CD4-positive, alpha-beta T cell (primary cell): ENCODE measurements at regions of chr7 and their contacts with region 1.

Region 1: DNA sequence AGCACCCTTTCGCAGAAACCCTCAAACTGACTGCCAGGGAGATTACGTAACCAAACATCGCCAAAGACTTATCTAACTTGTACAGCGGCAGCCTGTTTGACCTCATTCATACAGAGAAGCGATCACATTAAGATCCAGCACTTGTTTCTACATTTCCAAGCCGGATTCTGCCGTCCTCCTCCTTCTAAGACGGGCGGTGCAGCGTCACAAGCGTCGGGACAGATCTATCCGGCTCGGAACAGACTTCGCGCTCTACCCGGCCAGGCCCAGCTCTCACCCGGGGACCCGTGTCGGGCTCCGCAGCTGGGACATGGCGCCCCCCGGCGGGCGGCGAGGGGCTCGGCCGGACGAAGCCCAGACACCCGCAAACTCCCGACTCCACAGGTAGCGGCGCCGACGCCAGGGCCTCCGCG is 373 bp downstream of the H2AZ2 start:
- DNase-seq: peak; percentile 75 to 94 (median 84)
- ATAC-seq: peak; percentile 54
- H3K4me3 ChIP-seq: peak overlapping the region; percentile 71
- H3K4me3 Mint-ChIP-seq: peak overlapping the region; percentile 87
- H3K27ac ChIP-seq: peak overlapping the region; percentile 91 to 99
- H3K27ac Mint-ChIP-seq: peak overlapping the region; percentile 95
- H3K4me1 ChIP-seq: peaks cover 17% of the 10 kb centered on the region
- H3K4me1 Mint-ChIP-seq: peaks cover 43% of the 10 kb centered on the region
- H3K27me3 ChIP-seq: no peaks in the 10 kb centered on the region
- H3K27me3 Mint-ChIP-seq: peaks cover 4% of the 10 kb centered on the region
- CTCF ChIP-seq: peak; percentile 68

Region 2: DNA sequence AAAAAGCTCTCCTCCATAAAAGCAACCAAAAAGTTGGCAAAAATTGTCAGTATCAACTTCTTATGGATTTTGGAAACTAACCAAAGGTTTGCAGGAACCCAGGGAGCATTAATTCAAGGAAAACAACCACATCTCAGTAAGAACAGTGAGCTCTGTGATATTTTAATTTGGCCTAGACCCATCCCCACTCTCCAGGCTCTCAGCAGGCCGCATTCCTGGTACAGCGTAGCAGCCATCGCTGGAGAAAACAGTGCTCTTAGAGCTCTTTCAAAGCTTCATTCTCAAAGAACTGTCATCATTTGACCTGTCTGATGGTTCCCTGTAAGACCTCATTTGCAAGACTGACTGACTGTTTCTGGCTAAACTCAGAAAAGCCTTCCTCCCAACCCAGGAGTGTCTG is 438.9 kb before region 1 on chr7:
- CTCF ChIA-PET with region 1: no interaction called
- POLR2A ChIA-PET with region 1: no interaction called
- intact Hi-C with region 1: no loop called
- DNase-seq: no peak
- ATAC-seq: no peak
- H3K4me3 ChIP-seq: no peak overlapping the region
- H3K4me3 Mint-ChIP-seq: no peak overlapping the region
- H3K27ac ChIP-seq: no peak overlapping the region
- H3K27ac Mint-ChIP-seq: no peak overlapping the region
- H3K4me1 ChIP-seq: no peaks in the 10 kb centered on the region
- H3K4me1 Mint-ChIP-seq: peaks cover 22% of the 10 kb centered on the region
- H3K27me3 ChIP-seq: no peaks in the 10 kb centered on the region
- H3K27me3 Mint-ChIP-seq: no peaks in the 10 kb centered on the region
- CTCF ChIP-seq: no peak

Region 3: GRCh38 chr7:44587843-44588711 is 259.4 kb before region 1 on chr7:
- CTCF ChIA-PET with region 1: interaction called, 3 read pairs
- POLR2A ChIA-PET with region 1: interaction called, 65 read pairs
- intact Hi-C with region 1: loop called (anchors 1 to 2 kb)
- DNase-seq: peak; percentile 30 to 81 (median 57)
- ATAC-seq: peak; percentile 76
- H3K4me3 ChIP-seq: no peak overlapping the region
- H3K4me3 Mint-ChIP-seq: no peak overlapping the region
- H3K27ac ChIP-seq: no peak overlapping the region
- H3K27ac Mint-ChIP-seq: no peak overlapping the region
- H3K4me1 ChIP-seq: peaks cover 2% of the 10 kb centered on the region
- H3K4me1 Mint-ChIP-seq: peaks cover 7% of the 10 kb centered on the region
- H3K27me3 ChIP-seq: no peaks in the 10 kb centered on the region
- H3K27me3 Mint-ChIP-seq: no peaks in the 10 kb centered on the region
- CTCF ChIP-seq: peak; percentile 88

Region 4: GRCh38 chr7:44638611-44639557 is 208.6 kb before region 1 on chr7:
- CTCF ChIA-PET with region 1: interaction called, 3 read pairs
- POLR2A ChIA-PET with region 1: interaction called, 6 read pairs
- intact Hi-C with region 1: loop called in 1 of 2 experiments (anchors 1 kb)
- DNase-seq: peak; percentile 58 to 93 (median 78)
- ATAC-seq: peak; percentile 55
- H3K4me3 ChIP-seq: peak overlapping the region; percentile 21
- H3K4me3 Mint-ChIP-seq: peak overlapping the region; percentile 89
- H3K27ac ChIP-seq: peak overlapping the region; percentile 90 to 95
- H3K27ac Mint-ChIP-seq: peak overlapping the region; percentile 96
- H3K4me1 ChIP-seq: peaks cover 86% of the 10 kb centered on the region
- H3K4me1 Mint-ChIP-seq: peaks cover 72% of the 10 kb centered on the region
- H3K27me3 ChIP-seq: no peaks in the 10 kb centered on the region
- H3K27me3 Mint-ChIP-seq: no peaks in the 10 kb centered on the region
- CTCF ChIP-seq: no peak

Region 5: GRCh38 chr7:44797329-44798251 is 49.9 kb before region 1 on chr7:
- CTCF ChIA-PET with region 1: interaction called, 9 read pairs
- POLR2A ChIA-PET with region 1: interaction called, 58 read pairs
- intact Hi-C with region 1: loop called (anchors 1 to 2 kb)
- DNase-seq: peak; percentile 65 to 94 (median 80)
- ATAC-seq: peak; percentile 57
- H3K4me3 ChIP-seq: peak overlapping the region; percentile 65
- H3K4me3 Mint-ChIP-seq: peak overlapping the region; percentile 91
- H3K27ac ChIP-seq: peak overlapping the region; percentile 92 to 97
- H3K27ac Mint-ChIP-seq: peak overlapping the region; percentile 93
- H3K4me1 ChIP-seq: peaks cover 29% of the 10 kb centered on the region
- H3K4me1 Mint-ChIP-seq: peaks cover 40% of the 10 kb centered on the region
- H3K27me3 ChIP-seq: no peaks in the 10 kb centered on the region
- H3K27me3 Mint-ChIP-seq: no peaks in the 10 kb centered on the region
- CTCF ChIP-seq: peak; percentile 56

Region 6: GRCh38 chr7:44885394-44886317 is 38.1 kb after region 1 on chr7 and contains the start of gene PURB:
- CTCF ChIA-PET with region 1: interaction called, 6 read pairs
- POLR2A ChIA-PET with region 1: interaction called, 87 read pairs
- intact Hi-C with region 1: loop called (anchors 1 to 2 kb)
- DNase-seq: peak; percentile 93 to 100 (median 96)
- ATAC-seq: peak; percentile 88
- H3K4me3 ChIP-seq: peak within 1 kb of the TSS; percentile 68
- H3K4me3 Mint-ChIP-seq: peak within 1 kb of the TSS; percentile 87
- H3K27ac ChIP-seq: peak within 1 kb of the TSS; percentile 96 to 97
- H3K27ac Mint-ChIP-seq: peak within 1 kb of the TSS; percentile 100
- H3K4me1 ChIP-seq: peaks cover 32% of the 10 kb centered on the region
- H3K4me1 Mint-ChIP-seq: peaks cover 43% of the 10 kb centered on the region
- H3K27me3 ChIP-seq: no peaks in the 10 kb centered on the region
- H3K27me3 Mint-ChIP-seq: no peaks in the 10 kb centered on the region
- CTCF ChIP-seq: no peak
- total RNA-seq, gene PURB: 17.0 to 17.4 TPM

Region 7: GRCh38 chr7:45111298-45112223 is 264.0 kb after region 1 on chr7 and contains the start of gene TBRG4:
- CTCF ChIA-PET with region 1: interaction called, 4 read pairs
- POLR2A ChIA-PET with region 1: interaction called, 12 read pairs
- intact Hi-C with region 1: loop called (anchors 1 to 5 kb)
- DNase-seq: peak; percentile 86 to 98 (median 91)
- ATAC-seq: peak; percentile 78
- H3K4me3 ChIP-seq: peak within 1 kb of the TSS; percentile 94
- H3K4me3 Mint-ChIP-seq: peak within 1 kb of the TSS; percentile 98
- H3K27ac ChIP-seq: peak within 1 kb of the TSS; percentile 99
- H3K27ac Mint-ChIP-seq: peak within 1 kb of the TSS; percentile 96
- H3K4me1 ChIP-seq: peaks cover 51% of the 10 kb centered on the region
- H3K4me1 Mint-ChIP-seq: peaks cover 55% of the 10 kb centered on the region
- H3K27me3 ChIP-seq: no peaks in the 10 kb centered on the region
- H3K27me3 Mint-ChIP-seq: peaks cover 9% of the 10 kb centered on the region
- CTCF ChIP-seq: no peak
- total RNA-seq, gene TBRG4: 104 to 105 TPM